ENCODE measurements at regions of chr2 and their contacts with region 1.

Region 1: GRCh38 chr2:11904029-11904428 is 157.6 kb downstream of the LPIN1 start:
- DNase-seq: peak; percentile 60 to 81 (median 61)
- H3K4me3 ChIP-seq: peak overlapping the region in 1 of 3 experiments; percentile 35
- H3K4me3 Mint-ChIP-seq: no peak overlapping the region
- H3K27ac ChIP-seq: peak overlapping the region in 1 of 2 donors; percentile 52
- H3K27ac Mint-ChIP-seq: peak overlapping the region; percentile 64 to 93 (median 89)
- H3K4me1 ChIP-seq: peaks cover 67 to 77% of the 10 kb centered on the region in 2 donors
- H3K4me1 Mint-ChIP-seq: peaks cover 73% of the 10 kb centered on the region
- H3K27me3 ChIP-seq: no peaks in the 10 kb centered on the region
- H3K27me3 Mint-ChIP-seq: peaks cover 0 to 4% (median 2%) of the 10 kb centered on the region in 3 donors
- CTCF ChIP-seq: peak; percentile 35

Region 2: GRCh38 chr2:11482723-11483518 is 421.1 kb before region 1 on chr2:
- intact Hi-C with region 1: no loop called
- DNase-seq: no peak
- H3K4me3 ChIP-seq: no peak overlapping the region
- H3K4me3 Mint-ChIP-seq: peak overlapping the region in 1 of 2 donors; percentile 90
- H3K27ac ChIP-seq: no peak overlapping the region
- H3K27ac Mint-ChIP-seq: no peak overlapping the region
- H3K4me1 ChIP-seq: peaks cover 0 to 2% of the 10 kb centered on the region in 2 donors
- H3K4me1 Mint-ChIP-seq: peaks cover 6% of the 10 kb centered on the region
- H3K27me3 ChIP-seq: peaks cover 61 to 83% of the 10 kb centered on the region in 2 donors
- H3K27me3 Mint-ChIP-seq: peaks cover 70 to 86% (median 78%) of the 10 kb centered on the region in 3 donors
- CTCF ChIP-seq: no peak

Region 3: DNA sequence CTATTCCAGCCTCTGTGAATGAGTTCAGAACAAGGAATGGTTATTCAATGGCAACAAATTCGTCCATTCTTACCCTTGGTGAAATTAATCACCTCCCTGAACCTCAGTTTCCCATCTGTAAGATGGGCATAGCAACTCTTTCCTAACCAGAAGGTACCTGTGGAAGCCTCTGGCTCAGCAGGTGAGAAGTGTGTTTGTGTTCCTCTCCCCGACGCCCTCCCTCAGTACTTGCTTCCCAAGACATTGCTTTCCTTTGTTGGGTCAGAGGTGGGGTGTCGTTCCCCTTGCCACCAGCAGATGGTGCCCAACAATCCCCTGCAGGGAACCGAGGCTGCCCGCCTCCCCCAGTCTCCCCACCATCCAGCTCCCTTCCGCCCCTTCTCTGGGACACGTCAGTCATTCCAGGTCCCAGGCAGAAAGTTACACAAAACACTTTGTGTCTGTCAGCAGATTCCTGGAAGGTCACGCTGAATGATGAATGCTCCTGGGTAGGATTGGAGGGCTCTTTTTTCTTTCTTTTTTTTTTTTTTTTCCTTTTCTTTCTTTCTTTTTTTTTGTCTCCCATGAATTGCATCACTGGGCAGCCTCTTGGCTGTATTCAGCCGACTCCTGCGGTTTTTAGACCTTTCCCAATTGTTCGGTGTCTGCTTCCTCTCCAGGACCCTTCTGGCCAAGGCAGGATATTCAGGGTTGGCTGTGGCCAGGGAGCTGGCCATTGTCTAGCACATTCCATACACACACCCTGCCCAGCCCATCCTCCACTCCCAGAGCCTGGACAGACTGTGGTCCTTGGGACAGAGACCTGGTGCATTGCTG is 40.3 kb before region 1 on chr2:
- intact Hi-C with region 1: loop called in 1 of 2 experiments (anchors 5 kb)
- DNase-seq: peak; percentile 51 to 78 (median 67)
- H3K4me3 ChIP-seq: peak overlapping the region in 1 of 3 experiments; percentile 39
- H3K4me3 Mint-ChIP-seq: peak overlapping the region; percentile 20 to 75
- H3K27ac ChIP-seq: no peak overlapping the region
- H3K27ac Mint-ChIP-seq: peak overlapping the region in 4 of 7 donors; percentile 16 to 64 (median 54)
- H3K4me1 ChIP-seq: peaks cover 24 to 27% of the 10 kb centered on the region in 2 donors
- H3K4me1 Mint-ChIP-seq: peaks cover 49% of the 10 kb centered on the region
- H3K27me3 ChIP-seq: peaks cover 2 to 12% of the 10 kb centered on the region in 2 donors
- H3K27me3 Mint-ChIP-seq: peaks cover 0 to 3% (median 3%) of the 10 kb centered on the region in 3 donors
- CTCF ChIP-seq: peak; percentile 95

Region 4: DNA sequence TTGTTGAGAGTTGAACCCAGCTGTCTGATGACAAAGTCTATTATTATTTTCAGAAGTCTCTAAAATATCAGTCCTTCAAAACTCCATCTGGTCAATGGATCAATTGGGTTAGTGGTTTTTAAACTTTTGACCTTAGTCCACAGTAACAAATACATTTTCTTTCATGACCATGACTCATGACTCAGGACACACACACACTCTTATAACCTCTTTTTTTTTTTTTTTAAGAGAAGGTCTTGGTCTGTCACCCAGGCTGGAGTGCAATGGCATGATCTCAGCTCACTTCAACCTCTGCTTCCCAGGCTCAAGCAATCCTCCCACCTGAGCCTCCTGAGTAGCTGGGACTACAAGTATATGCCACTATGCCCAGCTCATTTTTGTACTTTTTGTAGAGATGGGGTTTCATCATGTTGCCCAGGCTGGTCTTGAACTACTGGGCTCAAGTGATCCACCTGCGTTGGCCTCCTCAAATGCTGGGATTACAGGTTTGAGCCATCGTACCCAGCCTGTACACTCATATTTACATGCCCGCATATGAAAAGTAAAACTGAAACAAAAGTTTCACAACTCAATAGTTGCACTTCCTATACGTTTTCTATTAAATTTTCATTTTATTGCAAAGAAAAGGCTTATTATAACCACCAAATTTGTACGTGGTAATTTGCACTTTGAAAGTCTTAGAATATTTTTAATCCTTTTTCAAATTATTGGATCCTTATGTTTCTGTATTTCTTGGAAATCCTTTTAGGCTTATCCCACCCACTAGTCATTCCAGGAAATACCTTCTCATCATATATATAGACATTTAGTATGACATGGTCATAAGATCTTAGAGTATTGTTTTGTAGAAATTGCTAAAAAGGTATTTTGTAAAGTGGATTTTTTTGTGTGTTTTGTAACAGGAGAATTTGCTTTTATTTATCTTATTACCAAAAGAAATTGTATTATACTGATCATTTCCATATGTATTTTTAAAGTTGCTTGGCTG is 41.4 kb after region 1 on chr2:
- intact Hi-C with region 1: loop called (anchors 5 kb)
- DNase-seq: peak; percentile 33 to 66 (median 61)
- H3K4me3 ChIP-seq: peak overlapping the region in 2 of 3 experiments; percentile 16 to 58
- H3K4me3 Mint-ChIP-seq: peak overlapping the region; percentile 60 to 81
- H3K27ac ChIP-seq: peak overlapping the region; percentile 48 to 86
- H3K27ac Mint-ChIP-seq: peak overlapping the region; percentile 95 to 98 (median 97)
- H3K4me1 ChIP-seq: peaks cover 29 to 37% of the 10 kb centered on the region in 2 donors
- H3K4me1 Mint-ChIP-seq: peaks cover 56% of the 10 kb centered on the region
- H3K27me3 ChIP-seq: no peaks in the 10 kb centered on the region
- H3K27me3 Mint-ChIP-seq: peaks cover 0 to 2% (median 0%) of the 10 kb centered on the region in 3 donors
- CTCF ChIP-seq: no peak

Region 5: GRCh38 chr2:12014088-12014960 is 110.3 kb after region 1 on chr2:
- intact Hi-C with region 1: loop called in 1 of 2 experiments (anchors 10 kb)
- DNase-seq: peak; percentile 25 to 35 (median 34)
- H3K4me3 ChIP-seq: no peak overlapping the region
- H3K4me3 Mint-ChIP-seq: peak overlapping the region in 1 of 2 donors; percentile 9
- H3K27ac ChIP-seq: no peak overlapping the region
- H3K27ac Mint-ChIP-seq: peak overlapping the region in 5 of 7 donors; percentile 4 to 83 (median 38)
- H3K4me1 ChIP-seq: peaks cover 14 to 18% of the 10 kb centered on the region in 2 donors
- H3K4me1 Mint-ChIP-seq: peaks cover 44% of the 10 kb centered on the region
- H3K27me3 ChIP-seq: peaks cover 0 to 2% of the 10 kb centered on the region in 2 donors
- H3K27me3 Mint-ChIP-seq: peaks cover 2 to 8% (median 6%) of the 10 kb centered on the region in 3 donors
- CTCF ChIP-seq: no peak

Measured in CD14-positive monocyte (primary cell).